ENCODE measurements at regions of chr21 and their contacts with region 1.

Region 1: DNA sequence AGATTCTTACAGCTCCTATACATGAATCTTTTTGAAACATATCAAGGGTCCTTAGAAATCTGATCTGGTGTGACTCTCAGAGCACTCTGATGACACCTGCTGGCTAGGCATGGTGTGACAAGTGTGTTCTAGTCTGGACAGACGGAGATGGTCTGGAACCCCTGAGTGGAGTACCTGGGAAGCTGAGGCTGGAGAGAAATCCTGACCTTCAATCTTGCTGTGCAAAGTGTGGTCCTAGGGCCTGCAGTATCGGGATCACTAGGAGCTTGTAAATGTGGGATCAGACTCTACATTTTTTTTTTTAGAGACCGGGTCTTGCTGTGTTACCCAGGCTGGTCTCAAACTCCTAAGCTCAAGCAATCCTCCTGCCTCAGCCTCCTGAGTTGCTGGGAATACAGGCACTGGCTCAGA is 78.6 kb upstream of the SOD1 start:
- DNase-seq: peak in 1 of 2 experiments; percentile 85
- H3K4me3 ChIP-seq: no peak overlapping the region
- H3K27ac ChIP-seq: no peak overlapping the region
- H3K4me1 ChIP-seq: no peaks in the 10 kb centered on the region
- H3K27me3 ChIP-seq: no peaks in the 10 kb centered on the region
- CTCF ChIP-seq: peak; percentile 73 to 91 (median 86)
- EP300 ChIP-seq: no peak
- POLR2A ChIP-seq: no peak
- RAD21 ChIP-seq: peak; percentile 91 to 94

Region 2: DNA sequence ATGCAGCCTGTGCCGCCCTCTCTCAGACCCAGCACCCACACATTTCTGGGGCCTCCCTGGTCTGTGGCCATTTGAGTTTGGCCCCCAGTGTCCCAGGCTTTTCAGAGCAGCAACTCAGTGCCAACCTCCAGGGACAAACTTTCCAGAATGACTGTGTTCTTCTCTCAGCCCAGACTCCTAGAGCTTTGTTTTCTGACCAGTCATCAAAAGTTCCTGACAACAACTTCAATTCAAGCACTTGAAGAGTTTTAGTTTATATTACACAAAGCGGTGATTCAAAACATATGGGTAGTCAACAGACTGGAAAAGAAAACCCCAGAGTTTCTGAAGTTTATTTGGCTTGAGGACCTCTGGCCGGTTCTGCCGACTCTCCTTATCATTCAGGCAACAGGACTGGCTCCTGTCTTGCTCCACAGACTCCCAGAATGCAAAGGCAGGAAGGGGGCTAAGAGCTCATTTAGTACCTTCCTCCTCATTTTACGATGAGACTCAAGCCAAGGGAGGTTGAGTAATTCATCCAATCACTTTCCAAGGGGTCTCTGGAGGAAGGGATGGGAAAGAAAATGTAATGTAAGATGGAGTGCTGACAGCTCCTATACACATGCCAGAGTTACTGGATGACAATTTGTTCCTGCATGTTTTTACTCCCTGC is 209.9 kb before region 1 on chr21:
- CTCF ChIA-PET with region 1: no interaction called
- POLR2A ChIA-PET with region 1: no interaction called
- DNase-seq: no peak
- H3K4me3 ChIP-seq: no peak overlapping the region
- H3K27ac ChIP-seq: no peak overlapping the region
- H3K4me1 ChIP-seq: peaks cover 0 to 3% (median 0%) of the 10 kb centered on the region in 4 experiments; a peak in 1 of 7 replicates
- H3K27me3 ChIP-seq: no peaks in the 10 kb centered on the region
- CTCF ChIP-seq: no peak
- EP300 ChIP-seq: no peak
- POLR2A ChIP-seq: no peak
- RAD21 ChIP-seq: no peak

Region 3: DNA sequence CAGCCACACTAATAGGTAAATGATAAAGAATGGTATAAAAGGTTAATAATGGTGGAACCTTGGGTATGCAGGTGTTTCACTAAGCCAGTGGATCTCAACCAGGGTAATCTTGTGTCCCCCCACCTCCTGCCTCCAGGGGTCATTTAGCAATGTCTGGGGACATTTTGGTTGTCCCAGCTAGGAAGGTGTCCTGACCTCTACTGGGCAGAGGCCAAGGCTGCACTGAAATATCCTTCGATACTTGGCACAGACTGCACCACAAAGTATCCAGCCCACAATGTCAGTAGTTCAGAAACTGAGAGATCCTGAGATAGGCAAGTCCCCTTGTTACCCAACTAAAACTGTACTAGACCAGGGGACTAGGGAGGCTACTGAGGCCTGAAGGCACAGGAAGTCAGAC is 123.2 kb before region 1 on chr21:
- CTCF ChIA-PET with region 1: interaction called, 50 read pairs
- POLR2A ChIA-PET with region 1: no interaction called
- DNase-seq: no peak
- H3K4me3 ChIP-seq: no peak overlapping the region
- H3K27ac ChIP-seq: no peak overlapping the region; the same call in 1 of the 2 replicates
- H3K4me1 ChIP-seq: no peaks in the 10 kb centered on the region
- H3K27me3 ChIP-seq: no peaks in the 10 kb centered on the region
- CTCF ChIP-seq: peak; percentile 50 to 94 (median 70)
- EP300 ChIP-seq: no peak
- POLR2A ChIP-seq: no peak
- RAD21 ChIP-seq: peak; percentile 38 to 69

Region 4: GRCh38 chr21:31537872-31538576 is 42.8 kb before region 1 on chr21:
- CTCF ChIA-PET with region 1: interaction called, 81 read pairs
- POLR2A ChIA-PET with region 1: no interaction called
- DNase-seq: peak in 1 of 2 experiments; percentile 77
- H3K4me3 ChIP-seq: no peak overlapping the region
- H3K27ac ChIP-seq: no peak overlapping the region
- H3K4me1 ChIP-seq: no peaks in the 10 kb centered on the region
- H3K27me3 ChIP-seq: no peaks in the 10 kb centered on the region
- CTCF ChIP-seq: peak; percentile 17 to 78 (median 65)
- EP300 ChIP-seq: no peak
- POLR2A ChIP-seq: no peak
- RAD21 ChIP-seq: peak; percentile 67 to 75

Region 5: DNA sequence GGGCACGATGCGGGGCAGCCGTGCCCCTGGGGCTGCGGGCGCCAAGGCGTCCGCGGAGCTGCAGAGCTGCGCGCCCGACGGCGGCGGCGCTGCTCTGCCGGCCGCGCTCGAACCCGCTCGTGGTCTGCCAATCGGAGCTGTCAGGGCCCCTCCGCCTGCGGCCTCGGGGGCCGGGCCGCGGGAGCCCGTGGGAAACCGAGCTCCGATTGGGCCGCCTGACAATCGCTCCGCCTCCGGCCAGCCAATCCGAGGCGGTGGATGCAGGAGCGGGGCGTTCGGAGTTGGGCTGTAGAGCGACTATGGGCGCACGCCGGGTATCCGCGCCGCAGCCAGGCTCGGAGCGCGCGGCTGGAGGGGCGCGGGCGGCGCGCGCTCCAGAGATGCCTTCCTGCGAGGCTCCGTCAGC is 21.9 kb before region 1 on chr21:
- CTCF ChIA-PET with region 1: interaction called, 107 read pairs
- POLR2A ChIA-PET with region 1: interaction called, 11 read pairs
- DNase-seq: peak; percentile 92 to 94
- H3K4me3 ChIP-seq: peak overlapping the region; percentile 78 to 91 (median 88)
- H3K27ac ChIP-seq: peak overlapping the region; percentile 84
- H3K4me1 ChIP-seq: peaks cover 14 to 26% (median 24%) of the 10 kb centered on the region in 4 experiments
- H3K27me3 ChIP-seq: peaks cover 0 to 15% (median 7%) of the 10 kb centered on the region in 4 experiments; a peak in 5 of 7 replicates
- CTCF ChIP-seq: peak; percentile 53 to 62 (median 57)
- EP300 ChIP-seq: no peak
- POLR2A ChIP-seq: peak in 1 of 2 experiments; percentile 3; a peak in 2 of 3 replicates
- RAD21 ChIP-seq: peak in 1 of 2 experiments; percentile 41; a peak in 2 of 4 replicates

Region 6: DNA sequence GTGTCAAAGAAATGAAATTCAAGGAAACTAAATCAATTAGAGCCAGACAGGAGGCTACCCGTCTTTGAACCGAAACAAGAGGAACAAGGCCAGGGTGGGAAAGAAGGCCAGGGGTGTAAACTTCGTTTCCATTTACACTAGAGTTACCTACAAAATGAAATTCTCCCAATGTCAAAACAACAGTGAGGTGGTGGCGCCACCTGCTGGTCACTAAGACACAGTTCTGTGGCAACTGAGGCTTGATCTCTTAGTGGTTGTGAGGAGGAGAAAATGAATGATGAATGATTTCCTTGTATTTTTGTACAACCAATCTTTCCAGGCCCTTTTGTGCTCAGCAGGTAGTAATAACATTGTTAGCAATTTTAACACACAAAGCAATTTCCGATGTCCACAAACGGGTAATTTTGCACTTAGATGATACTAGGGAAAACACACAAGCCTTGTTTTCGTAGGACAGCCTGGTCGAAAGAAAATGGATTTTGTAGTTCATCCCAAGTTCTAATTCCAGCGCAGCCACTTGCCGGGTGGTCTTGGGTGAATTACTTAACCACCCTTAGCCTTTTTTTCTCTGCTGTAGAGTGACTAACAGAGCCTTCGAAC is 23.8 kb after region 1 on chr21:
- CTCF ChIA-PET with region 1: interaction called, 35 read pairs
- POLR2A ChIA-PET with region 1: no interaction called
- DNase-seq: peak; percentile 46 to 79
- H3K4me3 ChIP-seq: no peak overlapping the region
- H3K27ac ChIP-seq: no peak overlapping the region
- H3K4me1 ChIP-seq: no peaks in the 10 kb centered on the region
- H3K27me3 ChIP-seq: no peaks in the 10 kb centered on the region
- CTCF ChIP-seq: peak; percentile 70 to 87 (median 84)
- EP300 ChIP-seq: no peak
- POLR2A ChIP-seq: no peak
- RAD21 ChIP-seq: peak; percentile 96 to 97

Region 7: GRCh38 chr21:31634993-31635392 is 54.1 kb after region 1 on chr21:
- CTCF ChIA-PET with region 1: no interaction called
- POLR2A ChIA-PET with region 1: no interaction called
- DNase-seq: no peak
- H3K4me3 ChIP-seq: no peak overlapping the region
- H3K27ac ChIP-seq: no peak overlapping the region
- H3K4me1 ChIP-seq: no peaks in the 10 kb centered on the region
- H3K27me3 ChIP-seq: no peaks in the 10 kb centered on the region
- CTCF ChIP-seq: no peak
- EP300 ChIP-seq: no peak
- POLR2A ChIP-seq: no peak
- RAD21 ChIP-seq: no peak

Region 8: GRCh38 chr21:31830701-31831100 is 249.8 kb after region 1 on chr21:
- CTCF ChIA-PET with region 1: no interaction called
- POLR2A ChIA-PET with region 1: no interaction called
- DNase-seq: no peak
- H3K4me3 ChIP-seq: no peak overlapping the region
- H3K27ac ChIP-seq: no peak overlapping the region
- H3K4me1 ChIP-seq: no peaks in the 10 kb centered on the region
- H3K27me3 ChIP-seq: no peaks in the 10 kb centered on the region
- CTCF ChIP-seq: no peak
- EP300 ChIP-seq: no peak
- POLR2A ChIP-seq: no peak
- RAD21 ChIP-seq: no peak

Region 9: GRCh38 chr21:31964692-31965091 is 383.8 kb after region 1 on chr21:
- CTCF ChIA-PET with region 1: no interaction called
- POLR2A ChIA-PET with region 1: no interaction called
- DNase-seq: no peak
- H3K4me3 ChIP-seq: no peak overlapping the region
- H3K27ac ChIP-seq: no peak overlapping the region
- H3K4me1 ChIP-seq: no peaks in the 10 kb centered on the region
- H3K27me3 ChIP-seq: no peaks in the 10 kb centered on the region
- CTCF ChIP-seq: no peak
- EP300 ChIP-seq: no peak
- POLR2A ChIP-seq: no peak
- RAD21 ChIP-seq: no peak

Measured in H1 (cell line).